ENCODE measurements at regions of chr11 and their contacts with region 1.

Region 1: GRCh38 chr11:86919557-86920210 is 35.5 kb downstream of the FZD4 start:
- DNase-seq: peak in 3 of 5 donors; percentile 48 to 85 (median 77)
- H3K4me3 ChIP-seq: no peak overlapping the region
- H3K27ac ChIP-seq: no peak overlapping the region
- H3K4me1 ChIP-seq: peaks cover 6 to 26% (median 7%) of the 10 kb centered on the region in 3 donors
- H3K27me3 ChIP-seq: no peaks in the 10 kb centered on the region
- CTCF ChIP-seq: peak; percentile 72

Region 2: GRCh38 chr11:86577663-86578636 is 341.7 kb before region 1 on chr11:
- intact Hi-C with region 1: no loop called
- DNase-seq: peak in 3 of 5 donors; percentile 36 to 87 (median 75)
- H3K4me3 ChIP-seq: no peak overlapping the region
- H3K27ac ChIP-seq: peak overlapping the region in 1 of 2 donors; percentile 66
- H3K4me1 ChIP-seq: peaks cover 0 to 14% (median 11%) of the 10 kb centered on the region in 3 donors
- H3K27me3 ChIP-seq: no peaks in the 10 kb centered on the region
- CTCF ChIP-seq: no peak

Region 3: GRCh38 chr11:86869966-86870570 is 49.6 kb before region 1 on chr11:
- intact Hi-C with region 1: loop called (anchors 5 kb)
- DNase-seq: peak in 4 of 5 donors; percentile 51 to 87 (median 64)
- H3K4me3 ChIP-seq: no peak overlapping the region
- H3K27ac ChIP-seq: no peak overlapping the region
- H3K4me1 ChIP-seq: no peaks in the 10 kb centered on the region
- H3K27me3 ChIP-seq: no peaks in the 10 kb centered on the region
- CTCF ChIP-seq: peak; percentile 73

Region 4: DNA sequence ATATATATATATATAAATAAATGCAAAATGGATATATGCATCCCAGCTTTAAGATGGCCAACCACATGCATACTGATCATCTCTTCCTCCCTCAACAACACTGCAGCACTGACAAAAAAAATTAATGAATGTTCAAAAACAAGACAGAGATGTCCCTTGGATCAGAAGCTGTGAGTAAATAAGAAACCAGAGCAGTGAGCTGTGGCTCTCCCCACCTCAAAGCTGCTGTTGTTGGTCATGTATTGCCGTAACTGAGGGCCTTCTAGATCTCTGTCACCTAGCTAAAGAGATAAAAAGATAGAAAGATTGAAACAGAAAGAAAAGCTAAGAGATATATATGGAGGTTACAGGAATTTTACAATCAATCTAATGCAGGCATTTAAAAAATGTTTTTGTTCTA is 102.6 kb after region 1 on chr11:
- intact Hi-C with region 1: no loop called
- DNase-seq: no peak
- H3K4me3 ChIP-seq: no peak overlapping the region
- H3K27ac ChIP-seq: no peak overlapping the region
- H3K4me1 ChIP-seq: peaks cover 0 to 4% (median 0%) of the 10 kb centered on the region in 3 donors
- H3K27me3 ChIP-seq: no peaks in the 10 kb centered on the region
- CTCF ChIP-seq: no peak